MCF 10A (cell line): ENCODE measurements at regions of chr20 and their contacts with region 1.

Region 1: GRCh38 chr20:9407805-9408421 is 106.5 kb upstream of the LAMP5 start:
- DNase-seq: peak; percentile 80
- H3K4me3 Mint-ChIP-seq: no peak overlapping the region
- H3K27ac Mint-ChIP-seq: no peak overlapping the region
- H3K4me1 Mint-ChIP-seq: no peaks in the 10 kb centered on the region
- H3K27me3 Mint-ChIP-seq: no peaks in the 10 kb centered on the region
- CTCF ChIP-seq: peak; percentile 84

Region 2: DNA sequence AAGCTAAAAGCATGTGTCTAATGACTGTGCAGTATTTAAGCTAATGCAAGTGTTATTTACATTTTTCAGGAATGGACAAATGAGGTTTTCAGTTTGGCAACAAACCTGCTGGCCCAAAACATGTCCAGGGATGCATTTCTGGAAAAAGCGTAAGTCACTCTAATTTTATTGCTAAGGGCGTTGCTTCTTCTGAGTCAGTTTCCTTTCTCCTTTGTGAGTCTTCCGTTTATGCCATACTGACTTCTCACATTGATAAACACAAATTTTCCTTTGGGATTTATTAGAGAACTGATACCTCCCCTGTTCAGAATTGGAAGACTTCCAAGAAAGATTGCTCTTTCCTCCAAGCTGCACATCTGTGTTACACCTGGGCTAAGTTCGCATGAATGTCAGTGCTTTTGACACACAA is 761.9 kb before region 1 on chr20:
- CTCF ChIA-PET with region 1: no interaction called
- POLR2A ChIA-PET with region 1: no interaction called
- intact Hi-C with region 1: no loop called
- DNase-seq: peak; percentile 60
- H3K4me3 Mint-ChIP-seq: no peak overlapping the region
- H3K27ac Mint-ChIP-seq: peak overlapping the region; percentile 87
- H3K4me1 Mint-ChIP-seq: peaks cover 38% of the 10 kb centered on the region
- H3K27me3 Mint-ChIP-seq: no peaks in the 10 kb centered on the region
- CTCF ChIP-seq: no peak

Region 3: DNA sequence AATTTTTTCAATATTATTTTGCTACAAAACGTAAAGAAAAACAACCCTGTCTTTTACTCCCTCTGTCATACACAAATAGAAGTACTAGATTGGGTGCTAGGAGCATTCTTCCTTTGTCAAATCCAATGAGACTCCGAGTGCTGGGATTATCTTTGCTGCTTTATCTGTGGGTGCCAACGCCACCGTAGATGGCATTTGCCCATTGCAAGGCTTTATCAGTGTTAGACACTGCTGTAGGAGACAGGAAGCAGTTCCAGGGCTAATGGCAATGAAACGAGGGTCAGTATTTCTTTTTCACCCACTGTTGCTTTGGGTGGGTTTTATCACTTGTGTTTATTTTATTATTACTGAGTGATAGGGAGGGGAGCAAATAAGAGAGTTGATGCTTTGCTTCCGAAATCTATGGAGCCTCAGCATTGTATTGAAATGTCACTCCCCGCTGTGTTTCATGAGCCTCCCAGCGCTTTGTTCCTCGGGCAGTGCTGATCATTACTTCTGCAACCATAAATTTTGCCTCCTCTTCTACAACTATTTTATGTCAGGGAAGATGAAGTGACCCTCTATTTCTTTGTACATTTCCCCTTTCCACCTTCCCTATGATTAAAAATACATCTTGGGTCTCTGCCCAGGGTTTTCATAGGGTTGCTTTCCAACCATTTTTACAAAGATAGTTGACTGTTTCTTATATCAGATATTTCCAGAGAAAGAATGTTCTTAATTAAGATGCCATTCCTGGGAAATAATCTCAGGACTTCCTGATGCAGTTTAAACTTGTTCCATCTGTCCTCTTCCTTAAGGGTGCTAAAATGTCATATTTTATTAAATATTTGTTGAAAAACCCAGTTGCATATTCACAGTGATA is 19.7 kb after region 1 on chr20:
- CTCF ChIA-PET with region 1: interaction called, 90 read pairs
- POLR2A ChIA-PET with region 1: no interaction called
- intact Hi-C with region 1: no loop called
- DNase-seq: no peak
- H3K4me3 Mint-ChIP-seq: no peak overlapping the region
- H3K27ac Mint-ChIP-seq: no peak overlapping the region
- H3K4me1 Mint-ChIP-seq: no peaks in the 10 kb centered on the region
- H3K27me3 Mint-ChIP-seq: no peaks in the 10 kb centered on the region
- CTCF ChIP-seq: no peak

Region 4: GRCh38 chr20:9573335-9574121 is 165.6 kb after region 1 on chr20:
- CTCF ChIA-PET with region 1: interaction called, 13 read pairs
- POLR2A ChIA-PET with region 1: no interaction called
- intact Hi-C with region 1: no loop called
- DNase-seq: no peak
- H3K4me3 Mint-ChIP-seq: no peak overlapping the region
- H3K27ac Mint-ChIP-seq: no peak overlapping the region
- H3K4me1 Mint-ChIP-seq: no peaks in the 10 kb centered on the region
- H3K27me3 Mint-ChIP-seq: no peaks in the 10 kb centered on the region
- CTCF ChIP-seq: no peak

Region 5: DNA sequence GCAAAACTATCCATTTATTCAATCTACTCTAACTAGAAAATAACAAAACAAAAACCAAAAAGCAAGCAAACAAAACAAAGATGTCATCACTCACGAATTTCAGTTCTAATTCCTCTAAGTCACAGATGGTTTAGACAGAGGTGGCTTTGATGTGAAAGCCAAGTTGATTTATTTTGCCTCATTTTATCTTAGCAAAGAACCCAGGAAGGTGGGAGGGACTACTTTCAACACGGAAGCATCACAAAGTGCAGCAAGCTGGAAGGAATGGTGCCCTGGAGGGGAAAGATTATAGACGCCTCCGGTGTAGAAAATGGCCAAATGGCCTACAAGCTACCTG is 194.9 kb after region 1 on chr20:
- CTCF ChIA-PET with region 1: interaction called, 748 read pairs
- POLR2A ChIA-PET with region 1: interaction called, 22 read pairs
- intact Hi-C with region 1: no loop called
- DNase-seq: no peak
- H3K4me3 Mint-ChIP-seq: no peak overlapping the region
- H3K27ac Mint-ChIP-seq: no peak overlapping the region
- H3K4me1 Mint-ChIP-seq: no peaks in the 10 kb centered on the region
- H3K27me3 Mint-ChIP-seq: no peaks in the 10 kb centered on the region
- CTCF ChIP-seq: no peak

Region 6: GRCh38 chr20:9626357-9626756 is 218.4 kb after region 1 on chr20:
- CTCF ChIA-PET with region 1: interaction called, 13 read pairs
- POLR2A ChIA-PET with region 1: no interaction called
- intact Hi-C with region 1: no loop called
- DNase-seq: peak; percentile 39
- H3K4me3 Mint-ChIP-seq: no peak overlapping the region
- H3K27ac Mint-ChIP-seq: no peak overlapping the region
- H3K4me1 Mint-ChIP-seq: no peaks in the 10 kb centered on the region
- H3K27me3 Mint-ChIP-seq: peaks cover 10% of the 10 kb centered on the region
- CTCF ChIP-seq: no peak

Region 7: GRCh38 chr20:9710685-9711084 is 302.8 kb after region 1 on chr20:
- CTCF ChIA-PET with region 1: no interaction called
- POLR2A ChIA-PET with region 1: no interaction called
- intact Hi-C with region 1: no loop called
- DNase-seq: no peak
- H3K4me3 Mint-ChIP-seq: no peak overlapping the region
- H3K27ac Mint-ChIP-seq: no peak overlapping the region
- H3K4me1 Mint-ChIP-seq: no peaks in the 10 kb centered on the region
- H3K27me3 Mint-ChIP-seq: no peaks in the 10 kb centered on the region
- CTCF ChIP-seq: no peak

Region 8: DNA sequence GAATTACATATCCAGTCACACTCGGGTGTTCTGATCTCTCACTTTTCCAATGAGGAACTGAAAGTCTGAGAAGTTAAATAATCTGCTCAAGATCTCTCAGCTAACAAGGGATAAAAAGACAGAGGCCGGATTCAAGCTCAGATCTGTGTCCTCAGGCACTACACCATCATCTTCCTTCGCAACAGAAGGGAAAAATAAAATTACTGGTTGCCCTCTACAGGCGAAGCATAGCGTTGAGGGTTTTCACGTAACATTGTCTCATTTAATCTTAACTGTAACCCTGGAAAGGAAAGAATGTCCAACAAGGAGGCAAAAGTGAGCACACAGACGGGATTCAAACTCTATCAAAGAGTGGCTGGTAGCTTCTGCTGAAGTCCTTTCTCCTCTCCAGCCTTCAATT is 559.1 kb after region 1 on chr20:
- CTCF ChIA-PET with region 1: interaction called, 11 read pairs
- POLR2A ChIA-PET with region 1: no interaction called
- intact Hi-C with region 1: loop called (anchors 10 kb)
- DNase-seq: peak; percentile 37
- H3K4me3 Mint-ChIP-seq: no peak overlapping the region
- H3K27ac Mint-ChIP-seq: no peak overlapping the region
- H3K4me1 Mint-ChIP-seq: no peaks in the 10 kb centered on the region
- H3K27me3 Mint-ChIP-seq: no peaks in the 10 kb centered on the region
- CTCF ChIP-seq: peak; percentile 41